K562 (cell line): ENCODE measurements at regions of chr6 and their contacts with region 1.

Region 1: GRCh38 chr6:6131492-6132109 is 124.9 kb upstream of the NRN1 start:
- DNase-seq: peak; percentile 59 to 67 (median 66)
- ATAC-seq: peak; percentile 91
- H3K4me3 ChIP-seq: no peak overlapping the region
- H3K27ac ChIP-seq: no peak overlapping the region
- H3K4me1 ChIP-seq: no peaks in the 10 kb centered on the region
- H3K27me3 ChIP-seq: no peaks in the 10 kb centered on the region
- CTCF ChIP-seq: peak; percentile 64 to 72 (median 68)
- EP300 ChIP-seq: no peak
- POLR2A ChIP-seq: no peak
- RAD21 ChIP-seq: peak; percentile 24 to 60; a peak in 2 of 4 replicates

Region 2: GRCh38 chr6:5764401-5764955 is 367.1 kb before region 1 on chr6:
- CTCF ChIA-PET with region 1: no interaction called
- POLR2A ChIA-PET with region 1: no interaction called
- in situ Hi-C with region 1: no loop called
- intact Hi-C with region 1: no loop called
- DNase-seq: no peak
- ATAC-seq: no peak
- H3K4me3 ChIP-seq: no peak overlapping the region
- H3K27ac ChIP-seq: no peak overlapping the region
- H3K4me1 ChIP-seq: no peaks in the 10 kb centered on the region
- H3K27me3 ChIP-seq: peaks cover 0 to 22% of the 10 kb centered on the region in 2 experiments; a peak in 1 of 5 replicates
- CTCF ChIP-seq: no peak
- EP300 ChIP-seq: no peak
- POLR2A ChIP-seq: no peak
- RAD21 ChIP-seq: no peak

Region 3: GRCh38 chr6:5950361-5950785 is 181.2 kb before region 1 on chr6:
- CTCF ChIA-PET with region 1: no interaction called
- POLR2A ChIA-PET with region 1: no interaction called
- in situ Hi-C with region 1: no loop called
- intact Hi-C with region 1: loop called (anchors 10 kb)
- DNase-seq: peak; percentile 47 to 62 (median 56)
- ATAC-seq: peak; percentile 96
- H3K4me3 ChIP-seq: no peak overlapping the region
- H3K27ac ChIP-seq: no peak overlapping the region
- H3K4me1 ChIP-seq: no peaks in the 10 kb centered on the region
- H3K27me3 ChIP-seq: no peaks in the 10 kb centered on the region
- CTCF ChIP-seq: peak; percentile 58 to 80 (median 67)
- EP300 ChIP-seq: no peak
- POLR2A ChIP-seq: no peak
- RAD21 ChIP-seq: peak in 1 of 2 experiments; percentile 25; a peak in 1 of 4 replicates

Region 4: DNA sequence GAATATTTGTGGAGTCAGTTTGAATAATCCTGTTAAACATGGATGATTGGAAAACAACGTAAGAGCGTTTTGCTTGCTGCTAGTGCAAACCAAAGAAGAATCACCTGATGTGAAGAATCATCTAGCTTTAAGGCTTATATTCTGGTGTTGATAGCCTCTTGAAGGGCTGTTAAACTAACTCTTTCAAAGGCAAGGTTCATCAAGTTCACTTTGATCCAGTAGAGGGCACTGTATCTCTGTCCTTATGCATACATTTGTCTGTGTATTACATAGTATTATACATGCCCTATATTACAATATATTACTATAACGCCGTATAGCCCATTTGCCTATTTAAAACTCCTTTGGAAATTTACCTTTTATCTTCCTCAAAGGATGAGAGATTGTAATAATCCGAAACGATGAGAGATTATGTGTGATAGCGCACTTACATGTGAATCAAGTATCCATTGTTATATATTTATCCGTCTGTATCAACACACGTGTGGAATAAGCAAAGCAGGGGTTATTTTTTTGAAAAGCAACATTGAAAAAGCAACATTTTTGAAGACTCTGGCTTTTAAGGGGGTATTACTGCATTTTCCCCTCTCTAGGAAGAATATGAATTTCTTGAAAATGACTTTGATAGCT is 74.1 kb before region 1 on chr6:
- CTCF ChIA-PET with region 1: no interaction called
- POLR2A ChIA-PET with region 1: no interaction called
- in situ Hi-C with region 1: no loop called
- intact Hi-C with region 1: loop called (anchors 5 kb)
- DNase-seq: peak; percentile 31 to 64 (median 44)
- ATAC-seq: peak; percentile 93
- H3K4me3 ChIP-seq: no peak overlapping the region
- H3K27ac ChIP-seq: no peak overlapping the region
- H3K4me1 ChIP-seq: no peaks in the 10 kb centered on the region
- H3K27me3 ChIP-seq: peaks cover 0 to 5% of the 10 kb centered on the region in 2 experiments; a peak in 2 of 5 replicates
- CTCF ChIP-seq: peak; percentile 38 to 76 (median 66); a peak in 5 of 6 replicates
- EP300 ChIP-seq: no peak
- POLR2A ChIP-seq: no peak
- RAD21 ChIP-seq: peak; percentile 62 to 81